Heart right ventricle (tissue), 16 donors: ENCODE measurements at regions of chr17 and their contacts with region 1.

Region 1: DNA sequence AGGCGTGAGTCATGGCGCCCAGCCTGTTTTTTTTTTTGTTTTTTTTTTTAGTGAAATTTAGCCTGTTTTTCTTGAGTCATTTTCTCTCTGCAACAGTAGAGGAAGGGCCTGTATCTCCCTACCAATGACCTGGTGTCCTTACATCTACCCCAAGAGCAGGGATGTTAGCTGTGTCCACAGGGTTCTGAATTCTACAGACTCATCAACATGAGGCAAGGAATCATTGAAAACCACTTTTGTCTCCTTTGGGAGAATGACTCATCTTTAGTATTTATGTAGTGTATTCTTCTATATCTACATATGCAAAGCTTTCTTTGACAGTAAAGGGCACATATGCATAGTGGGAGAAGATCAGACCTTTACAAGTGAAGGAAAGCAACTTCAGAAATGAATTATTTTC is 105.3 kb downstream of the SPECC1 start:
- DNase-seq: no peak
- ATAC-seq: no peak
- H3K4me3 ChIP-seq: no peak overlapping the region
- H3K27ac ChIP-seq: no peak overlapping the region
- H3K4me1 ChIP-seq: peaks cover 0 to 5% (median 0%) of the 10 kb centered on the region in 9 donors
- H3K27me3 ChIP-seq: no peaks in the 10 kb centered on the region
- CTCF ChIP-seq: no peak

Region 2: DNA sequence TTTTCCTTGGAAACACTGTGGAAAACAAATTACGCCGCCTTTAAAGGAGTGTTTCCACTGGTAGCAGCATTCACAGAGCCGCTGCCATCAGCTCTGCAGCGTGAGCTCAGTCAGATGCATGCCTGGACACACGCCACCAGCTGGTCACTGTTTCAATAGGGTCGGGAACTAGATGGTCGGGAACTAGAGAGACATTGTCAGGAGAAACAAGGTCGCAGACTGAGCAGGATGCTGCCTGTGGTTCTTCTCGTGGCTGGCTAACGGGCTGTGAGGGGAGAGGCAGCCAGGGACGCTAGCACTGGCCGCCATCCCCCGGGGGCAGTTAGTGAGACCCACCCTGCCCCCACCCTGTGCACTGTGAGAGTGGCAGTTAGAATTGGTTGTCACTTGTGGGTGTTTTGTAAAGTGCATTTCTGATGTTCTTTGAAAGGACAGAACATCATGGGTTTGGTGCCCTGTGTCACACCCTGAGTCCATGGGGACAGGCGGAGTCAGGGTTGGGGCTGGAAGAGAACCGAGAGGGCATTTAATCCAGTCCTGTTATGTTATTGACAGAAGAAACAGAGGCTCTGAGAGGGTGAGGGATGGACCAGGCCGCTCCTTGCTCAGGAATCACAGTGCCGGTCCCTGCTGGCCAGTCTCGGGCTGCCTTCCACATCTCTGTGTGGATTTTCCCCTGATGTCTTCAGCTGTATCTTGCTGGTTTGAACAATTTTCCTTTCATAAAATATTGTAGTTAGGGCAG is 19.0 kb before region 1 on chr17:
- intact Hi-C with region 1: loop called in 1 of 10 experiments (anchors 2 kb)
- DNase-seq: peak; percentile 78 to 82
- ATAC-seq: peak; percentile 58 to 78 (median 71)
- H3K4me3 ChIP-seq: peak overlapping the region in 2 of 10 donors; percentile 3 to 15
- H3K27ac ChIP-seq: peak overlapping the region; percentile 52 to 96 (median 92)
- H3K4me1 ChIP-seq: peaks cover 8 to 66% (median 44%) of the 10 kb centered on the region in 9 donors
- H3K27me3 ChIP-seq: no peaks in the 10 kb centered on the region
- CTCF ChIP-seq: peak in 8 of 9 donors; percentile 19 to 71 (median 54)